ENCODE measurements at regions of chr10 and their contacts with region 1.

Region 1: GRCh38 chr10:114726820-114727271 is 68.8 kb upstream of the ABLIM1 start:
- DNase-seq: no peak
- ATAC-seq: no peak

Region 2: GRCh38 chr10:113965683-113966082 is 761.2 kb before region 1 on chr10:
- intact Hi-C with region 1: no loop called
- DNase-seq: no peak
- ATAC-seq: peak in 1 of 2 donors; percentile 26

Region 3: DNA sequence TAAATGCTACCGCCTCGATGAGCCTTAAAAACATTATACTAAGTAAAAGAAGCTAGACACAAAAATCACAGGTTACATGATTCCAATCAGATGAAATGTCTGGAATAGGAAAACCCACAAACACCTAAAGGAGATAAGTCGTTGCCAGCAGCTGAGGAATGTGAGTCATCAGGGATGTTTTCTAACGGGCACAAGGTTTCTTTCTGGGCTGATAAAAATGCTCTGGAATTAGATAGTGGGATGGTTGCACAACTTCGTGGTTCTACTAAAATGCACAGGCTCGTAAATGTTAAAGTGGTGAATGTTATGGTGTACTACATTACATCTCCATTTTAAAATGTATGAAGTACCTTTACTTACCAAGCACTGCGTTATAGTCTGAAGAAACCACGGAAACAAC is 78.5 kb before region 1 on chr10:
- intact Hi-C with region 1: no loop called
- DNase-seq: no peak
- ATAC-seq: peak in 1 of 2 donors; percentile 84

Region 4: DNA sequence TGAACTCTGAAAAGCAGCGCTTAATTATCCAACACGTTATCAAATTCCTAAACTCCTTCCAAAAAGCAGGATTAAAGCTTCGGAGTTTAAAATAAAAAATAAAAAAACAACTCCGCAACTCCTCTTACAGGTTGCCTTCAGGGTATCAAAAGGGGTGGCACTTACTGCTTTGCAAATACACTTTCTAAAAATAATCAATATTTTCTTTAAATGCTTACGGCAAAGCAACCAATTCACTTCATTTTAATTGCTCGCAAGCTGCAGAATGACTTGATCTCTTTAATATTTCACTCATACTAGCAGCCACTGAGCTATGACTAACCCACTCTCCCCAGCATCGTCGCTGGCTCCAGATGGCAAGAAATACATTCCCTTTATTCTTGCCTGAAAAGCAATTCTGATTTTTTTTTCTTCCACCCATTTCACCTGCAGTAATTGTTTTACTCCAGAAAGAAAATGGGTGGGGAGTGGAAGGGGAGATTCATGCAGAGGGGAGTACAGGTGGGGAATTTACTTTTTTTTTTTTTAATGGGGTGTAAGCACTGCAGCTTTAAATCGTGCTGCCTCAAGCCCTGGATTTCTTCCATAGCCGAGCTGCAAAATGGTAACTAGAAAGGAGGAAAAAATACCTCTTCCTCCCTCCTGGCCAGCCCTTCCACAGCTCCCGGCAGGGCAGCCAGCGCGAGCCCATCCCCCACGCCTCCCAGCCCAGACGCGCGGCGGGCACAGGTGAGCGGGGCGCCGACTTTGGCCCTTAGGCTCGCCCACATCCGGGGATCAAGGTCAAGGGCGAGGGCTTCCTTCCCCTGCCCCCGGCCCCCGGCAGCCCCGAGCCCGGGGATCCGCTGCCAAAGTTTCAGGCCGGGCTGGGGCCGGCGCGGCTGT is 40.5 kb after region 1 on chr10:
- intact Hi-C with region 1: loop called in 1 of 2 experiments (anchors 5 kb)
- DNase-seq: peak; percentile 42
- ATAC-seq: peak; percentile 79

Region 5: GRCh38 chr10:115049957-115050356 is 323.1 kb after region 1 on chr10:
- intact Hi-C with region 1: no loop called
- DNase-seq: no peak
- ATAC-seq: no peak

Measured in left cardiac atrium (tissue), 4 donors.